Ascending aorta (tissue), 2 donors: ENCODE measurements at regions of chr1 and their contacts with region 1.

Region 1: GRCh38 chr1:54764133-54764921 is at the start of gene PARS2:
- DNase-seq: peak; percentile 92 to 98
- H3K4me3 ChIP-seq: peak within 1 kb of the TSS; percentile 70 to 86
- H3K27ac ChIP-seq: peak within 1 kb of the TSS; percentile 29 to 72
- H3K4me1 ChIP-seq: peaks cover 4 to 5% of the 10 kb centered on the region in 2 donors
- H3K27me3 ChIP-seq: no peaks in the 10 kb centered on the region
- CTCF ChIP-seq: no peak
- total RNA-seq, gene PARS2: 0.43 TPM

Region 2: DNA sequence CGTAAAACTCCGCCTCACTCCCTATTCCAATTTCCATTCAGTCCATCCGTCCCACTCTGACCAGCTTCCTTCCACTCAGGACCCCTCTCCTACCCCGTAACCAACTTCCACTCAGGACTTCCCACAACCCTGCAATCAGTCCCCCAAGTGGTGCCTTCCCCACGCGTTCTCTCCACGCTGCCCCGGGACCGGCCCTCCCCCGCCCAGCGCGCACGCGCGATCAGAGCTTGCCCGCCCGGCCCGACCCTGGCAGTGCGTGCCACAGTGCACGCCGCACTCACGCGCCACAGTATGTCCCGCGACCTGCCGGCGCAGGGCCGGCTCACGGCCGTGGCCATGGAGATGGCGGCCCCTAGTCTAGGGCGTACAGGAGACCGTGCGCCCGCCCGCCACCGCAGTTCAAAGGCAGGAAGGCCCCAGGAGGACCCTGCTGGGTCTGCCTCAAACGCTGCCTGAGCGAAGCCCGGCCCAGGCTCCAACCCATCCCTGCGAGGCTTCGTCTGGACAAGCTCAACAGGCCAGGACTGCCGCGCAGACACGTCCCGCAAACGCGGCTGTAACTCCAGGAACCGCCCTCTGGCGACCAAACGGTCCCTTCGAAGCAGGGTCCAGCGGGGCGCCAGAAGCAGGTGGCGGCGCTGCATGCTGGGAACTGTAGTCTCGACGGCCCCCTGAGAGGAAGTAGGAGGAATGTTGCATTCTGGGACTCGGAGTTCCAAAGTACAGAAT is 926.2 kb before region 1 on chr1 and contains the start of gene NDC1:
- intact Hi-C with region 1: loop called (anchors 1 kb)
- DNase-seq: peak; percentile 63 to 93
- H3K4me3 ChIP-seq: peak within 1 kb of the TSS; percentile 53 to 83
- H3K27ac ChIP-seq: peak within 1 kb of the TSS; percentile 90 to 97
- H3K4me1 ChIP-seq: peaks cover 0 to 9% of the 10 kb centered on the region in 2 donors
- H3K27me3 ChIP-seq: no peaks in the 10 kb centered on the region
- CTCF ChIP-seq: peak in 1 of 3 experiments; percentile 35
- total RNA-seq, gene NDC1: 9.3 TPM

Region 3: DNA sequence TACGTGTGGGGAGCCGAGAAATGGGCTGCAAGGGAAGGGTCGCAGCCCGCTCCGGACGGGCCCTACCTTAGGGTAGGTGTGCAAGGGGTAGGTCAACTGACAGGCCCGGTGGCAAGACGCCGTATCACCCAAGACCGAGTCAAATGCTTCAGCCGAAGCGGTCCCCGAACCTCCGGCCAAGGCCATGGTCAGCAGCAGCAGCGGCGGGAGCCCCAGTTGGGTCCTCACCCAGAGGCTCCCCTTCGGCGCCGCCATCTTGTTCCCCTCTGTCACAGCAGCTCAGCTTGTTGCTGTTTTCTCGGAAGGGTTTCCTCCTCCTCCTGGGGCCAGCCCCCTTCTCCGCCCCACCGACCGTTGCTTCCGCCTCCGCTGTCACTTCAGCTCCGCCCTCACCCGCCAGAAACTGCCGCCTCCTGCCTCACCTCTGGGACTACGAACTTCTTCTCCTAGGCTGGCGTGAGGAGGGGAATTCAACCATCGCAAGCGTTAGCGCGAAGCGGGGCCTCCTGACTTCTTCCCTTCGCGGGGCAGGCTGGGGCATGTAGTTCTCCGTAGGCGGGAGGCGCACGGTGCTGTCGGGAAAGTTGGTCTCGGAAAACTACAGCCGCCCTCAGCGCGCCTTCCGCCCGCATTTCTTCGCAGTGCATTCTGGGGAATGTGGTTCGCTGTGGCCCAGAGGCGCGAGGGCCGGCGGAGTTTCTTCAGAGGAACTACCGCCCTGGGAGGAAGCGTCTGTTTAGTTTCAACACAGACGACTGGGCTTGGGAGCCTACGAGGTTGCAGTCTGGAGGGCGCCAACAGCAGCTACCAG is 711.2 kb before region 1 on chr1 and contains the starts of genes TCEANC2 and TMEM59:
- intact Hi-C with region 1: loop called (anchors 1 kb)
- DNase-seq: peak; percentile 95 to 99
- H3K4me3 ChIP-seq: peak within 1 kb of the TSS; percentile 91 to 94
- H3K27ac ChIP-seq: peak within 1 kb of the TSS; percentile 96 to 98
- H3K4me1 ChIP-seq: peaks cover 5 to 41% of the 10 kb centered on the region in 2 donors
- H3K27me3 ChIP-seq: no peaks in the 10 kb centered on the region
- CTCF ChIP-seq: no peak
- total RNA-seq, gene TCEANC2: 0.64 TPM
- total RNA-seq, gene TMEM59: 97.5 TPM

Region 4: DNA sequence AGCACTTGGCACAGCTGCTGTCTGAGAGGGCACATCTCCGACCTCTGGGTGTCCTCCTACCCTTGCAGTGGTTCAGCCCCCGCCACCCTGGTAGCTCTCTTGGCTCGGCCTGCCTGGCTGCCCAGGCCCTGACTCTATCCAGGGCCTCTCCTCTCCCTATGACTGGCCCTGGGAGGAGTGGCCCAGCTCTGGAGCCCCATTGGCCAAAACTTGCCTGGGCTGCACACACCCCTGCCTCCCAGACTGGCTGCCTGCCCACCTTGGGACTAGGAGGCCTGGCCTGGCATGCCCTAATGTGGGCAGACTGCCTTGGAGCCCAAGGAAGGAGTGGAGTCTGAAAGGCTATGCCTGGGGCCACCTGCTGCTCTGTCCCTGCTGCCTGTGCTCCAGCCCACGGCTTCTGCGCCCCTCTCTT is 182.7 kb before region 1 on chr1:
- intact Hi-C with region 1: loop called (anchors 10 kb)
- DNase-seq: peak; percentile 90 to 98
- H3K4me3 ChIP-seq: no peak overlapping the region
- H3K27ac ChIP-seq: peak overlapping the region; percentile 93 to 96
- H3K4me1 ChIP-seq: peaks cover 0 to 37% of the 10 kb centered on the region in 2 donors
- H3K27me3 ChIP-seq: no peaks in the 10 kb centered on the region
- CTCF ChIP-seq: peak in 2 of 3 experiments; percentile 6 to 35

Region 5: GRCh38 chr1:54742282-54742681 is 22.0 kb before region 1 on chr1:
- intact Hi-C with region 1: no loop called
- DNase-seq: no peak
- H3K4me3 ChIP-seq: no peak overlapping the region
- H3K27ac ChIP-seq: no peak overlapping the region
- H3K4me1 ChIP-seq: no peaks in the 10 kb centered on the region
- H3K27me3 ChIP-seq: no peaks in the 10 kb centered on the region
- CTCF ChIP-seq: no peak

Region 6: DNA sequence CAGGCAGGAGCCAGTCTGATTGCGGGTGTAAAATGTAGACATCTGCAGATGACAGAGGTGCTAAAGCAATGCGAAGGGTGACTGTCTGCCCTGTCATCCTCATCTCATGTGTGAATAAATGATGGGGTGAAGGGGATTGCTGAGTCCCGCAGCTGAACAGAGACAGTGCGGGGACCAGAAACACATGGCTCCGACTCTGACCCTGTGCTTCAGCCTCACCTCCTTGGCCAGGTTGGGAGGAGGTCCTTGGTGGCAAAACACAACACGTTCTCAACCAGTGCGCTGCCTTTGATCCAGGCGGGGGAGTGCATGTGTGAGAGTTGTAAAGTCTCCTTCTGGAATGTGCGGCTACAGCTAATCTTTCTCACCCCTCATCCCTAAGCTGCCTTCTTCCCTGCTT is 68.8 kb after region 1 on chr1:
- intact Hi-C with region 1: no loop called
- DNase-seq: no peak
- H3K4me3 ChIP-seq: no peak overlapping the region
- H3K27ac ChIP-seq: no peak overlapping the region
- H3K4me1 ChIP-seq: no peaks in the 10 kb centered on the region
- H3K27me3 ChIP-seq: no peaks in the 10 kb centered on the region
- CTCF ChIP-seq: no peak